ENCODE measurements at regions of chr7 and their contacts with region 1.

Region 1: GRCh38 chr7:95476904-95477594 is 8.7 kb upstream of the ASB4 start:
- DNase-seq: peak; percentile 28
- ATAC-seq: peak; percentile 73
- H3K4me3 ChIP-seq: no peak overlapping the region
- H3K27ac ChIP-seq: no peak overlapping the region
- H3K4me1 ChIP-seq: peaks cover 4% of the 10 kb centered on the region
- H3K27me3 ChIP-seq: no peaks in the 10 kb centered on the region
- CTCF ChIP-seq: peak; percentile 69 to 86 (median 74)
- EP300 ChIP-seq: no peak
- POLR2A ChIP-seq: no peak
- RAD21 ChIP-seq: peak; percentile 94

Region 2: DNA sequence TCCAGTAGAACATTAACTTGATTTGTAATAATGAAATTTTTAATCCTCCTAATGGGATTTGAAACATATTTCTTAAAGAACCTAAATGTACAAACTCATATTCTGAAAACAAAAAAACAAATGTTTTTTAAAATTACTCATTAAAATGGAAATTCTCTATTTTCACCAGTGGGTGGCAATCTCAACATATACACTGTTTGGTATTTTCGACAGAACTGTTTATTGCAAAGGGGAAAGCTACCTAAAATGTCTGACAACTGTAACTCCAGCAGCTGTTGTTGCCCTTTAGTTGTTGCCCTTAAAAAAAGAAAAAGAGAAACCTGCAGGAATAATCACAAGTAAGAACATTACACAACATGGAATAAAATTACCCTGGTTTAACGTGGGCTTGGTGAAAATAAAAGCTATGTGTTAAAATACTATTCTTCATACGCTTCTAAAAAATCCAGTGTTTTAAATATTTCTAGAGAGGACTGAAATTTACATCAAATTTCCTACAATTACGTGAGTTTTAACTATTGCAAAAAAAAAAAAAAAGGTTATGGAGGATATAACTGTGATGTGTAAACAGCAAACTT is 1027.8 kb before region 1 on chr7:
- CTCF ChIA-PET with region 1: interaction called, 69 read pairs
- POLR2A ChIA-PET with region 1: no interaction called
- RAD21 ChIA-PET with region 1: interaction called, 52 read pairs
- SMC1A ChIA-PET with region 1: interaction called, 68 read pairs
- in situ Hi-C with region 1: loop called (anchors 5 kb)
- intact Hi-C with region 1: loop called (anchors 1 kb)
- DNase-seq: peak; percentile 8
- ATAC-seq: peak; percentile 68
- H3K4me3 ChIP-seq: no peak overlapping the region
- H3K27ac ChIP-seq: no peak overlapping the region
- H3K4me1 ChIP-seq: no peaks in the 10 kb centered on the region
- H3K27me3 ChIP-seq: no peaks in the 10 kb centered on the region; a peak in 1 of 4 replicates
- CTCF ChIP-seq: peak; percentile 47 to 61 (median 52); a peak in 5 of 6 replicates
- EP300 ChIP-seq: no peak
- POLR2A ChIP-seq: no peak
- RAD21 ChIP-seq: peak; percentile 94

Region 3: GRCh38 chr7:95199779-95200558 is 277.1 kb before region 1 on chr7:
- CTCF ChIA-PET with region 1: interaction called, 37 read pairs
- POLR2A ChIA-PET with region 1: no interaction called
- RAD21 ChIA-PET with region 1: interaction called, 16 read pairs
- SMC1A ChIA-PET with region 1: interaction called, 12 read pairs
- in situ Hi-C with region 1: loop called (anchors 10 kb)
- intact Hi-C with region 1: no loop called
- DNase-seq: no peak
- ATAC-seq: peak; percentile 85
- H3K4me3 ChIP-seq: no peak overlapping the region
- H3K27ac ChIP-seq: no peak overlapping the region
- H3K4me1 ChIP-seq: no peaks in the 10 kb centered on the region
- H3K27me3 ChIP-seq: no peaks in the 10 kb centered on the region
- CTCF ChIP-seq: peak; percentile 52 to 64 (median 62)
- EP300 ChIP-seq: no peak
- POLR2A ChIP-seq: no peak
- RAD21 ChIP-seq: peak; percentile 75

Region 4: DNA sequence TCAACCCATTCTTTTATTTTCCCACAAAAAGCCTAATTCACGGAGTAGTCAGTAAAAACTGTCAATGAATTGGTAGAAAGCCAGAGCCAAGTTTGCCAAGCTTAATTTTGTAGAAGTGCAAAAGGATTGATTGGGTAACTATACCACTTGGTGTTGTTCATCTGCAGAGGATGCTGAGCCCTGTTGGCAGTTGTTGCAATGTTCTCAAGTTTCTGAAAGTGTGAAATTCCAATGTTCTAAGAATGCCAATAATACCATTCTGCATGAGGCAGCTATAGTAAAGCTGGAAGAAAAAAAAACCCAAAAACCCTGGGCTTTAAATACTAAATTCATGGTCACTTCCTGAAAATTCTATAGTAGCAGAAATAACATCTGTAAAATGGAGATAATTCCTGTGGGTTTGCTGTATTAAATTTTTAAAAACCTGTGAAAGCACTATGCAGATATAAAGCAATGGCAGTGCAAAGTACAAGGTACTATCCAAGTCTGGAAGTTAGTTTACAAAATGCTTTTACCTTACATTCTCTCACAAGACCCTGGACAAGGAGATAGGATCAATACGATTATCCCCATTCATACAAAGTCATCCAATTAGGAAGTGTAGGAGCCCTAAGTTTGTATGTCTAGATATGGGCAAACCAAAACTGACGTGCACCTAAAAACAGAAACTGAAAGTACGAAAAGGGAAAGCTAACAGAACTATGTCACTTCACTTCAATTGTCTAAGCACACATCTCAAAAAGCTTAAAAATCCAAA is 146.7 kb before region 1 on chr7:
- CTCF ChIA-PET with region 1: interaction called, 3 read pairs
- POLR2A ChIA-PET with region 1: no interaction called
- RAD21 ChIA-PET with region 1: interaction called, 3 read pairs
- SMC1A ChIA-PET with region 1: interaction called, 12 read pairs
- in situ Hi-C with region 1: no loop called
- intact Hi-C with region 1: no loop called
- DNase-seq: peak; percentile 33
- ATAC-seq: peak; percentile 98
- H3K4me3 ChIP-seq: peak overlapping the region; percentile 16; the same call in 1 of the 2 replicates
- H3K27ac ChIP-seq: no peak overlapping the region; the same call in 1 of the 2 replicates
- H3K4me1 ChIP-seq: peaks cover 3% of the 10 kb centered on the region
- H3K27me3 ChIP-seq: no peaks in the 10 kb centered on the region
- CTCF ChIP-seq: no peak
- EP300 ChIP-seq: no peak
- POLR2A ChIP-seq: no peak
- RAD21 ChIP-seq: no peak

Region 5: GRCh38 chr7:95421000-95421846 is 55.8 kb before region 1 on chr7:
- CTCF ChIA-PET with region 1: interaction called, 50 read pairs
- POLR2A ChIA-PET with region 1: interaction called, 4 read pairs
- RAD21 ChIA-PET with region 1: interaction called, 33 read pairs
- SMC1A ChIA-PET with region 1: interaction called, 81 read pairs
- in situ Hi-C with region 1: no loop called
- intact Hi-C with region 1: no loop called
- DNase-seq: no peak
- ATAC-seq: peak; percentile 83
- H3K4me3 ChIP-seq: no peak overlapping the region
- H3K27ac ChIP-seq: no peak overlapping the region
- H3K4me1 ChIP-seq: no peaks in the 10 kb centered on the region
- H3K27me3 ChIP-seq: no peaks in the 10 kb centered on the region
- CTCF ChIP-seq: no peak
- EP300 ChIP-seq: no peak
- POLR2A ChIP-seq: no peak
- RAD21 ChIP-seq: no peak

Region 6: DNA sequence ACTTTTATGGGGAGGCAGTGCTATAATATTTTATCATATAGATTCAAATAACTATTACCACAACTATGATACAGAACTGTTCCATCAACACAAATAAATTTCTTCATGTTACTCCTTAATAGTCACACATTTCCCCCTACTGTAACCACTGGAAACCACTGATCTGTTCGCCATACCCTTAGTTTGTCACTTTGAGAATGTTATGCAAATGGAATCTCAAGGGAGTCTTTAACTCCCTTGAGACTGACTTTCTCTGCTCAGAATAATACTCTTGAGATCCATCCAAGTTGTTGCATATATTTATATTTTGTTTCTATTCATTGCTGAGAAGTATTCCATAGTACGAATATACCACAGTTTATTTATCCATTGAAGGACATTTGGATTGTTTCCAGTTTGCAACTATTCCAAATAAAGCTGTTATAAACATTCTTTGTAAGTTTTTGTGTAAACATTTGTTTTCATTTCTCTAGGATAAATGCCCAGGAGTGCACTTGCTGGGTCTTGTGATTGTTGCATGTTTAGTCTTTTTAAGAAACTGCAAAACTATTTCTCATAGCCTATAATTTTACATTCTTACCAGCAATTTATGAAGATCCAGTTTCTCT is 22.5 kb before region 1 on chr7:
- CTCF ChIA-PET with region 1: interaction called, 27 read pairs
- POLR2A ChIA-PET with region 1: interaction called, 4 read pairs
- RAD21 ChIA-PET with region 1: interaction called, 22 read pairs
- SMC1A ChIA-PET with region 1: interaction called, 32 read pairs
- in situ Hi-C with region 1: no loop called
- intact Hi-C with region 1: no loop called
- DNase-seq: no peak
- ATAC-seq: peak; percentile 63
- H3K4me3 ChIP-seq: no peak overlapping the region
- H3K27ac ChIP-seq: no peak overlapping the region
- H3K4me1 ChIP-seq: no peaks in the 10 kb centered on the region
- H3K27me3 ChIP-seq: no peaks in the 10 kb centered on the region
- CTCF ChIP-seq: no peak; a peak in 1 of 6 replicates
- EP300 ChIP-seq: peak in 1 of 2 experiments; percentile 39; a peak in 1 of 4 replicates
- POLR2A ChIP-seq: no peak
- RAD21 ChIP-seq: peak; percentile 21; the same call in 1 of the 2 replicates

Region 7: GRCh38 chr7:95527033-95527775 is 50.2 kb after region 1 on chr7:
- CTCF ChIA-PET with region 1: interaction called, 11 read pairs
- POLR2A ChIA-PET with region 1: no interaction called
- RAD21 ChIA-PET with region 1: interaction called, 6 read pairs
- SMC1A ChIA-PET with region 1: interaction called, 9 read pairs
- in situ Hi-C with region 1: no loop called
- intact Hi-C with region 1: no loop called
- DNase-seq: no peak
- ATAC-seq: peak; percentile 92
- H3K4me3 ChIP-seq: no peak overlapping the region
- H3K27ac ChIP-seq: no peak overlapping the region
- H3K4me1 ChIP-seq: no peaks in the 10 kb centered on the region
- H3K27me3 ChIP-seq: no peaks in the 10 kb centered on the region
- CTCF ChIP-seq: peak; percentile 73 to 83 (median 82)
- EP300 ChIP-seq: no peak
- POLR2A ChIP-seq: no peak
- RAD21 ChIP-seq: peak; percentile 96

Region 8: GRCh38 chr7:95777269-95777668 is 300.2 kb after region 1 on chr7:
- CTCF ChIA-PET with region 1: no interaction called
- POLR2A ChIA-PET with region 1: no interaction called
- RAD21 ChIA-PET with region 1: no interaction called
- SMC1A ChIA-PET with region 1: no interaction called
- in situ Hi-C with region 1: no loop called
- intact Hi-C with region 1: no loop called
- DNase-seq: no peak
- ATAC-seq: no peak
- H3K4me3 ChIP-seq: no peak overlapping the region
- H3K27ac ChIP-seq: no peak overlapping the region
- H3K4me1 ChIP-seq: no peaks in the 10 kb centered on the region
- H3K27me3 ChIP-seq: peaks cover 2 to 7% of the 10 kb centered on the region in 2 experiments; a peak in 1 of 4 replicates
- CTCF ChIP-seq: no peak
- EP300 ChIP-seq: no peak
- POLR2A ChIP-seq: no peak
- RAD21 ChIP-seq: no peak

Region 9: GRCh38 chr7:96720843-96721242 is 1243.8 kb after region 1 on chr7:
- CTCF ChIA-PET with region 1: no interaction called
- POLR2A ChIA-PET with region 1: no interaction called
- RAD21 ChIA-PET with region 1: no interaction called
- SMC1A ChIA-PET with region 1: no interaction called
- in situ Hi-C with region 1: no loop called
- intact Hi-C with region 1: no loop called
- DNase-seq: no peak
- ATAC-seq: no peak
- H3K4me3 ChIP-seq: no peak overlapping the region
- H3K27ac ChIP-seq: no peak overlapping the region
- H3K4me1 ChIP-seq: no peaks in the 10 kb centered on the region
- H3K27me3 ChIP-seq: no peaks in the 10 kb centered on the region
- CTCF ChIP-seq: no peak
- EP300 ChIP-seq: no peak
- POLR2A ChIP-seq: no peak
- RAD21 ChIP-seq: no peak